Body of pancreas (tissue), 4 donors: ENCODE measurements at regions of chr12 and their contacts with region 1.

Region 1: GRCh38 chr12:14260011-14260993 is 105.2 kb upstream of the ATF7IP start:
- DNase-seq: peak; percentile 94 to 96 (median 96)
- ATAC-seq: peak; percentile 63
- H3K4me3 ChIP-seq: no peak overlapping the region
- H3K27ac ChIP-seq: peak overlapping the region; percentile 70 to 95 (median 90)
- H3K4me1 ChIP-seq: peaks cover 40% of the 10 kb centered on the region
- H3K27me3 ChIP-seq: no peaks in the 10 kb centered on the region
- CTCF ChIP-seq: no peak
- POLR2A ChIP-seq: peak in 2 of 3 donors; percentile 31 to 66

Region 2: DNA sequence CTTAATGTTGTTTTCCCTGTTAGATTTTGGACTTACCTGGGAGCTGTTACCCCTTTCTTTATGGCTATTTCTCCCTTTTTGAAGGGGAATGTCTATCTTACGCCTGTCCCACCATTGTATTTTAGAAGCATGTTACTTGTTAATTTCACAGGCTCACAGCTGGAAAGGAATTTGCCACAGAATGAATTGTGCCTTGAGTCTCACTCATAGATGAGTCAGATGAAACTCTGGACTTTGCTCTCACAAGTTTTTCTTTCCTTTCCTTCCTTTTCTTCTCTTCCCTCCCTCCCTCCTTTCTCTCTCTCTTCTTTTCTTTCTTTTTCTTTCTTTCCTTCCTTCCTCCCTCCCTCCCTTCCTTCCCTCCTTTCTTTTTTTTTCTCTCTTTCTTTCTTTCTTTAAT is 95.8 kb after region 1 on chr12:
- intact Hi-C with region 1: loop called (anchors 10 kb)
- DNase-seq: no peak
- ATAC-seq: no peak
- H3K4me3 ChIP-seq: no peak overlapping the region
- H3K27ac ChIP-seq: no peak overlapping the region
- H3K4me1 ChIP-seq: no peaks in the 10 kb centered on the region
- H3K27me3 ChIP-seq: no peaks in the 10 kb centered on the region
- CTCF ChIP-seq: no peak
- POLR2A ChIP-seq: no peak